Heart left ventricle (tissue), 16 donors: ENCODE measurements at regions of chr13 and their contacts with region 1.

Region 1: GRCh38 chr13:28792992-28793391 is 27.1 kb upstream of the MTUS2 start:
- DNase-seq: no peak
- ATAC-seq: peak in 2 of 4 donors; percentile 68 to 85
- H3K4me3 ChIP-seq: no peak overlapping the region
- H3K27ac ChIP-seq: no peak overlapping the region
- H3K4me1 ChIP-seq: peaks cover 0 to 9% (median 0%) of the 10 kb centered on the region in 12 donors
- H3K27me3 ChIP-seq: peaks cover 0 to 19% (median 0%) of the 10 kb centered on the region in 9 donors
- CTCF ChIP-seq: no peak
- POLR2A ChIP-seq: no peak

Region 2: GRCh38 chr13:28313579-28313978 is 479.4 kb before region 1 on chr13:
- intact Hi-C with region 1: loop called in 1 of 10 experiments (anchors 10 kb)
- DNase-seq: no peak
- ATAC-seq: no peak
- H3K4me3 ChIP-seq: no peak overlapping the region
- H3K27ac ChIP-seq: no peak overlapping the region
- H3K4me1 ChIP-seq: peaks cover 0 to 16% (median 0%) of the 10 kb centered on the region in 12 donors
- H3K27me3 ChIP-seq: no peaks in the 10 kb centered on the region
- CTCF ChIP-seq: peak in 6 of 12 donors; percentile 10 to 40 (median 21)
- POLR2A ChIP-seq: no peak

Region 3: DNA sequence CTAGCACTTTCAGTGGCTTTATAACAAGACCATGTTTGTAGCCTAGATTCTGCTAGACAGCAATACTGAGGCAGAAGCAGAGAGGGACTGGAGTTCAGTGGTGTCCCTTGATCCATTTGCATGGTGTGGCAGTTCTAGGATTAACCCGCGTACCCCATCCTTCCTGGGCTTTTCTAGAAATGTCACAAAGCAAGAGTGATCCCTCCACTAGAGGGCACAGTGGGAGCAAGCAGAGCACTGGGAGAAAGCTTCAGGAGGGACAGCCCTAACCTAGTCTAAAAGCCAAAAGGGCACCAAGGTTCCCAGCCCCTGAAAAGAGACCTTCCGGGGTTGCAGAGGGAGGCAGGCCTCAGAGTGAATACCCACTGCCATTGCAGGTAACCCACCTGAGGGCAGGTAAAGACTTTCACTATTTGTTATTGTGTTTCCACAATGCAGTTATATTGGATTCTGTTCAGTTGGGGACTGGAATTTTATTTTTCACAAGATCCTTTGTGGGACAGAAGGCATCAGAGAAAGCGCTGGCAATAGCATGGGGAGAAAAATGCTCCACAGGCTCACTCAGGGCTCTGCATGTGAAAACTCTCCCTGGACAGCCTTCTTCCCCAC is 468.7 kb before region 1 on chr13:
- intact Hi-C with region 1: loop called in 8 of 10 experiments (anchors 2 to 10 kb)
- DNase-seq: peak in 4 of 5 donors; percentile 50 to 70 (median 62)
- ATAC-seq: peak; percentile 72 to 88 (median 81)
- H3K4me3 ChIP-seq: peak overlapping the region in 1 of 12 donors; percentile 11
- H3K27ac ChIP-seq: peak overlapping the region in 11 of 12 donors; percentile 10 to 82 (median 63)
- H3K4me1 ChIP-seq: peaks cover 4 to 55% (median 25%) of the 10 kb centered on the region in 12 donors
- H3K27me3 ChIP-seq: no peaks in the 10 kb centered on the region
- CTCF ChIP-seq: peak; percentile 67 to 91 (median 79)
- POLR2A ChIP-seq: no peak

Region 4: GRCh38 chr13:28329395-28330158 is 463.4 kb before region 1 on chr13:
- intact Hi-C with region 1: loop called in 7 of 10 experiments (anchors 2 to 10 kb)
- DNase-seq: peak in 2 of 5 donors; percentile 27 to 45
- ATAC-seq: peak in 3 of 4 donors; percentile 83 to 86 (median 86)
- H3K4me3 ChIP-seq: no peak overlapping the region
- H3K27ac ChIP-seq: peak overlapping the region in 7 of 12 donors; percentile 16 to 53 (median 41)
- H3K4me1 ChIP-seq: peaks cover 2 to 41% (median 20%) of the 10 kb centered on the region in 12 donors
- H3K27me3 ChIP-seq: no peaks in the 10 kb centered on the region
- CTCF ChIP-seq: no peak
- POLR2A ChIP-seq: no peak

Region 5: GRCh38 chr13:28623782-28624706 is 168.9 kb before region 1 on chr13:
- intact Hi-C with region 1: no loop called
- DNase-seq: no peak
- ATAC-seq: peak in 1 of 4 donors; percentile 14
- H3K4me3 ChIP-seq: no peak overlapping the region
- H3K27ac ChIP-seq: peak overlapping the region in 1 of 12 donors; percentile 85
- H3K4me1 ChIP-seq: peaks cover 0 to 39% (median 0%) of the 10 kb centered on the region in 12 donors
- H3K27me3 ChIP-seq: no peaks in the 10 kb centered on the region
- CTCF ChIP-seq: no peak
- POLR2A ChIP-seq: no peak

Region 6: DNA sequence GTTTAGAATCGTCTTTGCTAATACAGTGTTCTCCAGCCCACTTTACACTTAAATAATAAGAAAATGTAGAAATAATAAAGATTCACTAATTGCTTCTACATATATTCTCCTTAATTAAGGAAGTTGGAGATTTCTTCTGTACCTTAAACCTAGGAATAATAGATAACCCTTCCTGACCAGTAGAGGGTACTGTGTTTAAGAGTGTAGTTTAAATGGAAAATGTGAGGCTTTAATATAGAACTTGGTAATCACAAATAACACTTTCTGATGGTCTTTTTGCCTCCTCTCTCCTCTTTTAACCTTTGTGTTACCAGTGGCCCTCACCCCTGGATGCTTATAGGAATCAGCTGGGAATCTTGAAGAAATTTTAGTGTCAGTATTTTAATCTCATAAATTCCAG is 113.4 kb before region 1 on chr13:
- intact Hi-C with region 1: loop called in 9 of 10 experiments (anchors 2 to 10 kb)
- DNase-seq: no peak
- ATAC-seq: peak in 1 of 4 donors; percentile 48
- H3K4me3 ChIP-seq: no peak overlapping the region
- H3K27ac ChIP-seq: no peak overlapping the region
- H3K4me1 ChIP-seq: no peaks in the 10 kb centered on the region
- H3K27me3 ChIP-seq: no peaks in the 10 kb centered on the region
- CTCF ChIP-seq: peak in 11 of 12 donors; percentile 8 to 51 (median 37)
- POLR2A ChIP-seq: no peak

Region 7: DNA sequence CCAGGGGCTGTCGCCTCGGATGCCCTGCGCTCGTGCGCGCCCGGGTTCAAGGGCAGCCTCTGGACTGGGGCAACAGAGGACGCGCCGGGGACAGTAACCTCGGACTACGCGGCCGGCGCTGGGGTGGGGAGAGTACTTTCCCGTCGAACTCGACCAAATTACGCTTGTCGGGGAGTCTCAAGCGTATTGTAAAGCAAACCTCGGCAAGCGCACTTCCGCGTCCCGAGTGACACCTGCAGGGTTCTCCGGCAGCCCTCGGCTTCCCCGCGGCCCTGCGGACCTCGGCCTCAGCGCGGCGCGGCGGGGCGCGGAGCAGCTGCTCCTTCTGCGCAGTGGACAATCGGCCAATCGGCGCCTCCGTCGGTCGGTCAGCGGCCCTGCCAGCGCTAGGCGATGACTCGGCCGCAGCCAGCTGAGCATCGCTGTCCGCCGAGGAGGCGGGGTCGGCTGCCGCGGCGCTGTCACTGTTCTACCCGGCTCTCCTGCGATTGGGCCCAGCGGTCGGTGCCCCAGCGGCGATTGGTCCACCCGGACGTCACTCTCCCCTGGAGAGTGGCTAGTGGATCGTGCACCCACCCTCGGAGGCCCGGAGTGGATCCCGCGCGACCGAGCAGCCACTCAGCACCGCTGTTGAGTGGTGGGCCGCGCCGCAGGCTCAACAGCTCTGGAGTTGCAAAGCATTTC is 74.3 kb before region 1 on chr13 and contains the start of gene SLC46A3:
- intact Hi-C with region 1: loop called in 2 of 10 experiments (anchors 2 to 10 kb)
- DNase-seq: peak; percentile 99 to 100 (median 100)
- ATAC-seq: peak; percentile 98 to 99 (median 98)
- H3K4me3 ChIP-seq: peak within 1 kb of the TSS; percentile 54 to 87 (median 77)
- H3K27ac ChIP-seq: peak within 1 kb of the TSS; percentile 87 to 100 (median 98)
- H3K4me1 ChIP-seq: peaks cover 0 to 36% (median 29%) of the 10 kb centered on the region in 12 donors
- H3K27me3 ChIP-seq: no peaks in the 10 kb centered on the region
- CTCF ChIP-seq: peak in 5 of 12 donors; percentile 6 to 34 (median 20)
- POLR2A ChIP-seq: peak; percentile 40 to 78
- total RNA-seq, gene SLC46A3: 11.5 to 18.1 (median 16.2) TPM

Region 8: DNA sequence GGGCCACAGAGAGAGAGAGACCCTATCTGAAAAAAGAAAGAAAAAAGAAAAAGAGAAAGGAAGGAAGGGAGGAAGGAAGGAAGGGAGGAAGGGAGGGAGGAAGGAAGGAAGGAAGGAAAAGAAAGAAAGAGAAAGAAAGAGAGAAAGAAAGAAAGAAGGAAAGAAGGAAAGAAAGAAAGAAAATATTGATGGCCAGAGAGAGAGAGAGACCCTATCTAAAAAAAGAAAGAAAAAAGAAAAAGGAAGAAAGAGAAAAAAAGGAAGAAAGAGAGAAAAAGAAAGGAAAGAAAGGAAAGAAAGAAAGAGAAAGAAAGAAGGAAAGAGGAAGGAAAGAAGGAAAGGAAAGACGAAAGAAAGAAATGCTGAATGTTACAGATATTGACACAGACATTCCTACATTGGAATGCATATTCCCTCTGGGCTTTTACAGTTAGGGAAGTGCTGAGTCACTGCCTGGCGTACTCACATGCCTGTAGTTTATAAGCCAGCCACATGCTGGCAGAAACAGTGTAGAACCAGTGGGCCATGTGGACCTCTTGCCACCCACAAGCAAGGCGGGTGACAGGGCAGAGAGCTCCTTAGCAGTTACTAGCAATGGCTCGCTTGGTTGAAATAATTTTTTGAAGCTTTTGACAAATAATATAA is 39.6 kb before region 1 on chr13:
- intact Hi-C with region 1: loop called in 5 of 10 experiments (anchors 2 to 5 kb)
- DNase-seq: peak; percentile 44 to 69 (median 61)
- ATAC-seq: peak; percentile 64 to 82 (median 74)
- H3K4me3 ChIP-seq: no peak overlapping the region
- H3K27ac ChIP-seq: peak overlapping the region in 11 of 12 donors; percentile 60 to 89 (median 80)
- H3K4me1 ChIP-seq: peaks cover 0 to 48% (median 18%) of the 10 kb centered on the region in 12 donors
- H3K27me3 ChIP-seq: no peaks in the 10 kb centered on the region
- CTCF ChIP-seq: peak in 2 of 12 donors; percentile 10 to 18
- POLR2A ChIP-seq: no peak